Stomach (tissue), 19 donors: ENCODE measurements at regions of chr9 and their contacts with region 1.

Region 1: DNA sequence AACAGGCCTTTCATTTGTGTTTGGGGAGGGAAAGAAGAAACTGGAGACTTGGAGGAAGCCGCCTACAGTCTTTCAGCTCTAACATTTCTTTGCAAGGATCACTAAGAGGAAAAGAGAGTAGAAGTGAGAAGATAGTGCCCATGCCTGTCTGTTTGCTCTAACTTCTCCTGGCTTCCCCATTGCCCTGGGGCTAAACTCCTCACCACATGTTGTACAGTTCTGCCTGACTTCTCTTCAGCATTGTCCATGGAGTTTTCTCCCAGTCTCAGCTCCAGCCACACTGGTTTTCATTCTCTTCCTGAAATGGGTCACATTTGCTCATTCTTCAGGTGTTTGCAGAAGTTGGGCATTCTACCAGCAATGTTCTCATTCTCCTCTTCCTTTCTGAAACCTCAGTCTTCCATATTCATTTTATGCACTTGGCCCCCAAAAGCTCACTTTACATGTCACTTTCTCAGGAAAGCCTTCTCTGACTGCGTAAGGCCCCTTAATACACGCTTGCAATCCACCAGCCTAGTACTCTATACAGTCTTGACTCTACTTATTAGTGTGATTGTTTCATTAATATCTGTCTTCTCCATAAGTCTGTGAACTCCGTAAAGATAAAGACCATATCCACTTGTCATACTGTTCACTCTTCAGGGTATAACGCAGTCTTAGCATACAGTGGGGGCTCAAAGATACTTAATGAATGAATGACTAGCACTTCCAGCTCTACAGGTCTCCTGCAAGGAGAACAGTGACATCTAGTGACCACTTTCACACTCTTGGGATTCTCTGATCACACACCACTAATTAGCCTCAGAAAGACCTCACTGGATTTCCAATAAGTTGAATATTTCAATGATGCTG is 40.2 kb upstream of the TRIM32 start:
- DNase-seq: peak in 1 of 2 donors; percentile 72
- H3K4me3 ChIP-seq: no peak overlapping the region
- H3K27ac ChIP-seq: no peak overlapping the region
- H3K4me1 ChIP-seq: no peaks in the 10 kb centered on the region
- H3K27me3 ChIP-seq: no peaks in the 10 kb centered on the region
- CTCF ChIP-seq: peak in 4 of 7 experiments; percentile 30 to 42 (median 38)
- EP300 ChIP-seq: no peak
- POLR2A ChIP-seq: no peak

Region 2: DNA sequence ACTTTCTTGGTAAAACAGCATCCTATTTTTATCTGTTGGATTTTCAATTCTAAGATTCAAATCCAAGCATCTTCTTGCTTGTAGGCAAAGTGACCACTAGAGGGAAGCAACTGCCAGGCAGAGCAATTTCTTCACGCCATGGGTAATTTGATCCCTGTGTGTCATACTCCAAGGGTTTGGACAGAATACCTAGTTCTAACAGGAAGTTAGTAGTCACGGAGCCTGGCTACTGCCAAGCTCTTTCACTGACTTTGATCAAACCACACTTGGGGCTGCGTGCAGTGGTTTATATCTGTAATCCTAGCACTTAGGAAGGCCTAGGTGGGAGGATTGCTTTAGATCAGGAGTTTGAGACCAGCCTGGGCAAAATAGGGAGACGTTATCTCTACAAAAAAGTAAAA is 1055.3 kb before region 1 on chr9:
- intact Hi-C with region 1: loop called (anchors 10 kb)
- DNase-seq: peak; percentile 75 to 92
- H3K4me3 ChIP-seq: no peak overlapping the region
- H3K27ac ChIP-seq: peak overlapping the region in 4 of 5 donors; percentile 67 to 75 (median 70)
- H3K4me1 ChIP-seq: peaks cover 0 to 13% (median 6%) of the 10 kb centered on the region in 4 donors
- H3K27me3 ChIP-seq: peaks cover 0 to 16% (median 0%) of the 10 kb centered on the region in 3 donors
- CTCF ChIP-seq: peak in 5 of 7 experiments; percentile 38 to 83 (median 54)
- EP300 ChIP-seq: no peak
- POLR2A ChIP-seq: no peak